CD8-positive, alpha-beta T cell (primary cell): ENCODE measurements at regions of chr6 and their contacts with region 1.

Region 1: DNA sequence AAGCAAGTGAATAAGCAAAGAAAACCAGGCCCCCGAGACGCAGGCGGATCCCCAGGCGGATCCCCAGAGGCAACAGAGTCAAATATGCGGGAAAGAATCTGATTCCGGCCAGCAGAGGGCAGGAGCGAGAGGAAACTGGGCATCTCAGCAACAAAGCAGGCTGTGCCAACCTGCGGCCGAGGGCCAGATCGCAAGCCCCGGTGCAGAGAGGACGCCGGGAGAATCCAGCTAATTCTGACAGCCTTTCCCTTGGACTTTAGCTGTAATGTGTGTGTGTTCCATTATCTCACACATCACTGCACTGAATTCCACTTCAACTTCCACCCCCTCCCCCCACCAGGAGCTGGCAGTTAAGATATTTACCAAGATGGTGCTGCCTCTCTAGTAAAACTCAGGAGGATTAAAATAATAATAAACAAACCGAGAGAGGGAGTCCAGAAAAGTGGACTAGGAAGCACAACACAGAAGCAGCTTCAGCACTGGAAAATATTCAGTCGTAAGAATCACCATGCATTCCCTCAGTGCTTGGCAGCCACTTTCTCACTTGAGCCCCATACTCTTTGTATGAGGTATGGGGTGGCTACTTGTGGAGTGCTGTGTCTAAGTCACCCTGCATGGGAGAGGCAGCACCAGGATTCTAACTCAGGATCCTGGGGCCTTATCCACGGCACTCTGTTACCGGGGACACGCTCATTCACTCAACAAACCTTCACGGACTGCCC is 66.2 kb upstream of the SNX9 start:
- DNase-seq: peak; percentile 64 to 86 (median 78)
- ATAC-seq: peak; percentile 11
- H3K4me3 ChIP-seq: peak overlapping the region in 1 of 2 experiments; percentile 7
- H3K4me3 Mint-ChIP-seq: peak overlapping the region; percentile 7
- H3K27ac ChIP-seq: no peak overlapping the region
- H3K27ac Mint-ChIP-seq: peak overlapping the region; percentile 89
- H3K4me1 ChIP-seq: peaks cover 63% of the 10 kb centered on the region
- H3K4me1 Mint-ChIP-seq: peaks cover 72% of the 10 kb centered on the region
- H3K27me3 ChIP-seq: no peaks in the 10 kb centered on the region
- H3K27me3 Mint-ChIP-seq: no peaks in the 10 kb centered on the region
- CTCF ChIP-seq: peak; percentile 83

Region 2: GRCh38 chr6:157688960-157689599 is 67.8 kb before region 1 on chr6:
- CTCF ChIA-PET with region 1: no interaction called
- POLR2A ChIA-PET with region 1: no interaction called
- intact Hi-C with region 1: no loop called
- DNase-seq: no peak
- ATAC-seq: no peak
- H3K4me3 ChIP-seq: no peak overlapping the region
- H3K4me3 Mint-ChIP-seq: no peak overlapping the region
- H3K27ac ChIP-seq: no peak overlapping the region
- H3K27ac Mint-ChIP-seq: no peak overlapping the region
- H3K4me1 ChIP-seq: no peaks in the 10 kb centered on the region
- H3K4me1 Mint-ChIP-seq: no peaks in the 10 kb centered on the region
- H3K27me3 ChIP-seq: no peaks in the 10 kb centered on the region
- H3K27me3 Mint-ChIP-seq: no peaks in the 10 kb centered on the region
- CTCF ChIP-seq: no peak

Region 3: GRCh38 chr6:157789861-157790260 is 33.0 kb after region 1 on chr6:
- CTCF ChIA-PET with region 1: interaction called, 5 read pairs
- POLR2A ChIA-PET with region 1: no interaction called
- intact Hi-C with region 1: loop called in 1 of 2 experiments (anchors 5 kb)
- DNase-seq: no peak
- ATAC-seq: no peak
- H3K4me3 ChIP-seq: no peak overlapping the region
- H3K4me3 Mint-ChIP-seq: no peak overlapping the region
- H3K27ac ChIP-seq: no peak overlapping the region
- H3K27ac Mint-ChIP-seq: no peak overlapping the region
- H3K4me1 ChIP-seq: no peaks in the 10 kb centered on the region
- H3K4me1 Mint-ChIP-seq: peaks cover 5% of the 10 kb centered on the region
- H3K27me3 ChIP-seq: no peaks in the 10 kb centered on the region
- H3K27me3 Mint-ChIP-seq: no peaks in the 10 kb centered on the region
- CTCF ChIP-seq: no peak

Region 4: DNA sequence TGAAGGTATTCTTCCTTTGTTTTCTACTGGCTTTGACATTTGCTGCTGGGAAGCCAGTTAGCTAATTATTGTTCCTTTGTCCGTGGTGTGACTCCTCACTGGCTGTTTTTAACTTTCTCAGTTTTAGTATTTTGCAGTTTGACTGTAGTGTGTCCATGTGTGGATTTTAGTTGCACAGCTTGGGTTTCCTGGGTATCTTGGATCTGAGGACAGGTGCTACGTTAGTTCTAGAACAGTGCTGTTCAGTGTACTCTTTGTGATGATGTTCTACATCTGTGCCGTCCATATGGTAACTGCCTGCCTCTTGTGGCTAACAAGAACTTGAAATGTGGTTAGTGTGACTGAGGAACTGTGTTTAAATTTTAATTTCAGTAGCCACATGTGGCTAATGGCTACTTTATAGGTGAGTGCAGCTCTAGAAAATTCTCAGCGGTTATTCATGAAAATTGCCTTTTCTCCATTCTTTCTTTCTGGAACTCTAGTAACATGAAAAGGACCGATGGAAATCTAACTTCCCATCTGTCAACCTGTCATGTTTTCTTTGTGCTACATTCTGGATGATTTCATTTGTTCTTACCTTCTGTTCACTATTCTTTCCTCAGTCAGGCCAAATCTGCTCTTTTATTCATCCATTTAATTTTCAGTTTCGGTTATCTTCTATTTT is 73.6 kb after region 1 on chr6:
- CTCF ChIA-PET with region 1: interaction called, 14 read pairs
- POLR2A ChIA-PET with region 1: interaction called, 3 read pairs
- intact Hi-C with region 1: no loop called
- DNase-seq: peak in 1 of 9 experiments; percentile 24
- ATAC-seq: no peak
- H3K4me3 ChIP-seq: no peak overlapping the region
- H3K4me3 Mint-ChIP-seq: no peak overlapping the region
- H3K27ac ChIP-seq: no peak overlapping the region
- H3K27ac Mint-ChIP-seq: no peak overlapping the region
- H3K4me1 ChIP-seq: peaks cover 42% of the 10 kb centered on the region
- H3K4me1 Mint-ChIP-seq: peaks cover 70% of the 10 kb centered on the region
- H3K27me3 ChIP-seq: no peaks in the 10 kb centered on the region
- H3K27me3 Mint-ChIP-seq: no peaks in the 10 kb centered on the region
- CTCF ChIP-seq: no peak

Region 5: DNA sequence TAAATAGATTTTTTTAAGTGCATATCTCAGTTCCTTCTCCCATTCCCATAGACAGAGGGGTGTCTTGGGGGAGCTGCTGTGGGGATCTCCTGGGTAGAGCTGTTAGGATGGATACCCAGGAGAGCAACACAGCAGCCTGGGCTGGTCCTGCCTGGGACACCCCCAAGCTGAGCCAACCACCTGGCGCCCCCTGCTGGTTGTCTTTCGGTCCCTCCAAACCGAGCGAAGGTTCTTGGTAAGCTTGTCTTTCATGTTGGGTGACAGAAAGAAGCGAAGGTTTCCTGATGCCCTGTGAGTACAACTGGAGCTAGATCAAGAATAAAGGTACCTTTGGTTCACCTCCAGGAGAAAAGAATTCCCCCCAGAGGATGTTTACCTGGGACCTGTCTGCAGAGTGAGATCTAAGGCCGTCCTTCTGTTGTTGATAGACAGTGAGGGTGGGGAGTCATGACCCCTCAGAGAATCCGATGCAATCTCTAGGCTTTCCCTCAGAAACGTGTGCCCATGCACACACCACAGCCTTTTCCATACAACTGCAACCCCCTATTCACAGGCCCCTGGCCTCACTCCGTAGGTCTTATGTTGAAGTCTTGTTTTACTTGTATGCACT is 117.0 kb after region 1 on chr6:
- CTCF ChIA-PET with region 1: interaction called, 233 read pairs
- POLR2A ChIA-PET with region 1: interaction called, 9 read pairs
- intact Hi-C with region 1: loop called (anchors 1 to 2 kb)
- DNase-seq: peak; percentile 65 to 91 (median 81)
- ATAC-seq: peak; percentile 76
- H3K4me3 ChIP-seq: no peak overlapping the region
- H3K4me3 Mint-ChIP-seq: no peak overlapping the region
- H3K27ac ChIP-seq: no peak overlapping the region
- H3K27ac Mint-ChIP-seq: no peak overlapping the region
- H3K4me1 ChIP-seq: peaks cover 25% of the 10 kb centered on the region
- H3K4me1 Mint-ChIP-seq: peaks cover 29% of the 10 kb centered on the region
- H3K27me3 ChIP-seq: no peaks in the 10 kb centered on the region
- H3K27me3 Mint-ChIP-seq: no peaks in the 10 kb centered on the region
- CTCF ChIP-seq: peak; percentile 84

Region 6: DNA sequence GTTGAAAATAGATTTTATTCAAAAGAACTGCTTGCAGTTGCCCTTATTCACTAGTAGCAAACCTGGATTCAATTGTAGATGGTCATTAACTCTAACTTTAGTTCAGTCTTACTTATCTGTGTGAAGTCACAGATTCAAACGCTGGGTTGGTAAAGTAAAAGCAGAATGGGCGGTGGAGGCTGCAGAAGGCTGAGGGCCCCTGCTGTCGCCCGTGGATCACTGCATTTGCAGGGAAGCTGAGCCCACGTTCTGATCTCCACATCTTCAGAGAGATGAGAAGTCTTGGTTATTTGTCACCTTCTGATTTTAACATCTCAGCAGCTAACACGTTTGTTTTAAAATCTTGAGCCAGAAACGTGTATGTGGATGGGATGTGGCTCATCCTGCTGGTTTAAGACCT is 141.3 kb after region 1 on chr6:
- CTCF ChIA-PET with region 1: interaction called, 8 read pairs
- POLR2A ChIA-PET with region 1: no interaction called
- intact Hi-C with region 1: loop called in 1 of 2 experiments (anchors 5 kb)
- DNase-seq: peak in 4 of 9 experiments; percentile 44 to 63 (median 54)
- ATAC-seq: peak; percentile 56
- H3K4me3 ChIP-seq: no peak overlapping the region
- H3K4me3 Mint-ChIP-seq: no peak overlapping the region
- H3K27ac ChIP-seq: no peak overlapping the region
- H3K27ac Mint-ChIP-seq: peak overlapping the region; percentile 41
- H3K4me1 ChIP-seq: peaks cover under 1% of the 10 kb centered on the region
- H3K4me1 Mint-ChIP-seq: peaks cover 16% of the 10 kb centered on the region
- H3K27me3 ChIP-seq: no peaks in the 10 kb centered on the region
- H3K27me3 Mint-ChIP-seq: no peaks in the 10 kb centered on the region
- CTCF ChIP-seq: peak; percentile 45

Region 7: GRCh38 chr6:158026054-158026900 is 269.4 kb after region 1 on chr6:
- CTCF ChIA-PET with region 1: interaction called, 4 read pairs
- POLR2A ChIA-PET with region 1: no interaction called
- intact Hi-C with region 1: loop called (anchors 1 to 5 kb)
- DNase-seq: peak; percentile 64 to 92 (median 80)
- ATAC-seq: peak; percentile 77
- H3K4me3 ChIP-seq: peak overlapping the region; percentile 24 to 42
- H3K4me3 Mint-ChIP-seq: peak overlapping the region; percentile 81
- H3K27ac ChIP-seq: peak overlapping the region; percentile 65 to 91
- H3K27ac Mint-ChIP-seq: peak overlapping the region; percentile 97
- H3K4me1 ChIP-seq: peaks cover 27% of the 10 kb centered on the region
- H3K4me1 Mint-ChIP-seq: peaks cover 36% of the 10 kb centered on the region
- H3K27me3 ChIP-seq: no peaks in the 10 kb centered on the region
- H3K27me3 Mint-ChIP-seq: no peaks in the 10 kb centered on the region
- CTCF ChIP-seq: peak; percentile 75